Activated CD8-positive, alpha-beta T cell treated with anti-CD3 and anti-CD28 coated beads for 36 hours (primary cell): ENCODE measurements at regions of chr2 and their contacts with region 1.

Region 1: GRCh38 chr2:177164584-177165052 is 48.0 kb upstream of the HNRNPA3 start:
- DNase-seq: peak; percentile 85
- ATAC-seq: peak; percentile 40
- H3K4me3 Mint-ChIP-seq: no peak overlapping the region
- H3K27ac Mint-ChIP-seq: no peak overlapping the region
- H3K4me1 Mint-ChIP-seq: peaks cover 22% of the 10 kb centered on the region
- H3K27me3 Mint-ChIP-seq: no peaks in the 10 kb centered on the region
- CTCF ChIP-seq: peak; percentile 100

Region 2: GRCh38 chr2:177044671-177045070 is 119.9 kb before region 1 on chr2:
- CTCF ChIA-PET with region 1: no interaction called
- POLR2A ChIA-PET with region 1: no interaction called
- intact Hi-C with region 1: no loop called
- DNase-seq: no peak
- ATAC-seq: no peak
- H3K4me3 Mint-ChIP-seq: no peak overlapping the region
- H3K27ac Mint-ChIP-seq: no peak overlapping the region
- H3K4me1 Mint-ChIP-seq: no peaks in the 10 kb centered on the region
- H3K27me3 Mint-ChIP-seq: peaks cover 1% of the 10 kb centered on the region
- CTCF ChIP-seq: no peak

Region 3: GRCh38 chr2:177183860-177184259 is 19.2 kb after region 1 on chr2:
- CTCF ChIA-PET with region 1: interaction called, 20 read pairs
- POLR2A ChIA-PET with region 1: no interaction called
- intact Hi-C with region 1: no loop called
- DNase-seq: no peak
- ATAC-seq: no peak
- H3K4me3 Mint-ChIP-seq: no peak overlapping the region
- H3K27ac Mint-ChIP-seq: no peak overlapping the region
- H3K4me1 Mint-ChIP-seq: no peaks in the 10 kb centered on the region
- H3K27me3 Mint-ChIP-seq: no peaks in the 10 kb centered on the region
- CTCF ChIP-seq: no peak

Region 4: GRCh38 chr2:177221534-177221933 is 56.9 kb after region 1 on chr2:
- CTCF ChIA-PET with region 1: interaction called, 11 read pairs
- POLR2A ChIA-PET with region 1: interaction called, 4 read pairs
- intact Hi-C with region 1: no loop called
- DNase-seq: no peak
- ATAC-seq: no peak
- H3K4me3 Mint-ChIP-seq: no peak overlapping the region
- H3K27ac Mint-ChIP-seq: peak overlapping the region; percentile 1
- H3K4me1 Mint-ChIP-seq: peaks cover 40% of the 10 kb centered on the region
- H3K27me3 Mint-ChIP-seq: no peaks in the 10 kb centered on the region
- CTCF ChIP-seq: no peak

Region 5: GRCh38 chr2:177263451-177264208 is 99.0 kb after region 1 on chr2:
- CTCF ChIA-PET with region 1: interaction called, 67 read pairs
- POLR2A ChIA-PET with region 1: interaction called, 35 read pairs
- intact Hi-C with region 1: loop called (anchors 5 kb)
- DNase-seq: peak; percentile 96
- ATAC-seq: peak; percentile 63
- H3K4me3 Mint-ChIP-seq: peak overlapping the region; percentile 90
- H3K27ac Mint-ChIP-seq: peak overlapping the region; percentile 96
- H3K4me1 Mint-ChIP-seq: peaks cover 54% of the 10 kb centered on the region
- H3K27me3 Mint-ChIP-seq: no peaks in the 10 kb centered on the region
- CTCF ChIP-seq: peak; percentile 81

Region 6: GRCh38 chr2:177303939-177304338 is 139.3 kb after region 1 on chr2:
- CTCF ChIA-PET with region 1: interaction called, 11 read pairs
- POLR2A ChIA-PET with region 1: no interaction called
- intact Hi-C with region 1: loop called (anchors 10 kb)
- DNase-seq: no peak
- ATAC-seq: no peak
- H3K4me3 Mint-ChIP-seq: no peak overlapping the region
- H3K27ac Mint-ChIP-seq: no peak overlapping the region
- H3K4me1 Mint-ChIP-seq: peaks cover 11% of the 10 kb centered on the region
- H3K27me3 Mint-ChIP-seq: no peaks in the 10 kb centered on the region
- CTCF ChIP-seq: no peak

Region 7: GRCh38 chr2:177413703-177414102 is 249.1 kb after region 1 on chr2:
- CTCF ChIA-PET with region 1: interaction called, 37 read pairs
- POLR2A ChIA-PET with region 1: no interaction called
- intact Hi-C with region 1: loop called (anchors 2 kb)
- DNase-seq: no peak
- ATAC-seq: peak; percentile 75
- H3K4me3 Mint-ChIP-seq: no peak overlapping the region
- H3K27ac Mint-ChIP-seq: peak overlapping the region; percentile 64
- H3K4me1 Mint-ChIP-seq: peaks cover 44% of the 10 kb centered on the region
- H3K27me3 Mint-ChIP-seq: no peaks in the 10 kb centered on the region
- CTCF ChIP-seq: no peak

Region 8: DNA sequence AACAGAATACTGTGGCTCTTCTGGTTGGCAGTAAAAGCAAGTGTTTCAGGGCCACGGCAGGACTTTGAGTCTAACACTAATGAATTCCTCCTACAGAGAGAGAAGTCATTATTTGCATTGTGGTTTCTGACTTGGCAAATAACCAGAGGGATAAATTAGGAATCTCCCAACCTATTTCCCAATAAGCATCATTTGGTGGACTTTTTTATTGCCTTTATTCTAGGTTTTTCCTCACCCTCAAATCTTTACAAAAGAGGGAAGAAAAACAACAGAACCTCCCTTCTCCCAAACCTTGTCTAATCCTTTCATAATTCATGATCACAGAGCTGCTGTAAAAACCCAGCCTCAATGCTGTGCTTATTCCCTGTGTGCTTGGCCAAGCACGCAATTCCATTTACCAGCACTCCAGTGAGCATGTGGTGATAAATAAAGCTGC is 407.6 kb after region 1 on chr2:
- CTCF ChIA-PET with region 1: no interaction called
- POLR2A ChIA-PET with region 1: no interaction called
- intact Hi-C with region 1: no loop called
- DNase-seq: no peak
- ATAC-seq: no peak
- H3K4me3 Mint-ChIP-seq: no peak overlapping the region
- H3K27ac Mint-ChIP-seq: no peak overlapping the region
- H3K4me1 Mint-ChIP-seq: no peaks in the 10 kb centered on the region
- H3K27me3 Mint-ChIP-seq: no peaks in the 10 kb centered on the region
- CTCF ChIP-seq: no peak